ENCODE measurements at regions of chr18 and their contacts with region 1.

Region 1: GRCh38 chr18:7272311-7273049 is 41.6 kb downstream of the LRRC30 start:
- DNase-seq: peak; percentile 56 to 69
- H3K4me3 ChIP-seq: no peak overlapping the region
- H3K4me3 Mint-ChIP-seq: peak overlapping the region; percentile 31
- H3K27ac Mint-ChIP-seq: no peak overlapping the region
- H3K4me1 ChIP-seq: no peaks in the 10 kb centered on the region; the same call in 1 of the 2 replicates
- H3K4me1 Mint-ChIP-seq: peaks cover 7% of the 10 kb centered on the region
- H3K27me3 ChIP-seq: no peaks in the 10 kb centered on the region; the same call in 1 of the 2 replicates
- H3K27me3 Mint-ChIP-seq: no peaks in the 10 kb centered on the region
- CTCF ChIP-seq: peak; percentile 71 to 72

Region 2: GRCh38 chr18:7221424-7222155 is 50.9 kb before region 1 on chr18:
- CTCF ChIA-PET with region 1: no interaction called
- POLR2A ChIA-PET with region 1: no interaction called
- intact Hi-C with region 1: loop called (anchors 1 kb)
- DNase-seq: peak; percentile 75 to 77
- H3K4me3 ChIP-seq: no peak overlapping the region
- H3K4me3 Mint-ChIP-seq: no peak overlapping the region
- H3K27ac Mint-ChIP-seq: no peak overlapping the region
- H3K4me1 ChIP-seq: no peaks in the 10 kb centered on the region
- H3K4me1 Mint-ChIP-seq: no peaks in the 10 kb centered on the region
- H3K27me3 ChIP-seq: no peaks in the 10 kb centered on the region
- H3K27me3 Mint-ChIP-seq: peaks cover 6% of the 10 kb centered on the region
- CTCF ChIP-seq: peak; percentile 65 to 84

Region 3: DNA sequence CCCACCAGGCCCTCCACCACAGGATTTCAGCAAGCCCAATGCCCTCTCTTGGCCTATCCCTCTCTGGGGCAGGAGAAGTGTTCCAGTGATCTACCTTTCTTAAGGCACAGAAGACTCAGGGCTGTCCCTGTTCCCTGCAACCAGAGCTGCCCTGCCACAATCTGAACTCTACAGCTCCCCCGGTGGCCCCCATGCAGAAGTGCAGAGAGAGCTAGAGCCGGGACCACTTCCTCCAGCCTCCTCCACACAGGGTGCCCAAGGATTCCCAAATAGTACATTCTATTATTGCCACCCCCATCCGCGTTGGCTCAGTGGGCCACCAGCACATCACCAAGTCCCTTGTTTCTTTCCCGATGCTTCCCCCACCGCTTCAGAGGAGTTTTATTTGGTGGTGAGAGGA is 179.9 kb after region 1 on chr18:
- CTCF ChIA-PET with region 1: interaction called, 8 read pairs
- POLR2A ChIA-PET with region 1: no interaction called
- intact Hi-C with region 1: loop called (anchors 2 kb)
- DNase-seq: peak in 1 of 2 experiments; percentile 60
- H3K4me3 ChIP-seq: no peak overlapping the region
- H3K4me3 Mint-ChIP-seq: no peak overlapping the region
- H3K27ac Mint-ChIP-seq: no peak overlapping the region
- H3K4me1 ChIP-seq: peaks cover 6% of the 10 kb centered on the region; the same call in 1 of the 2 replicates
- H3K4me1 Mint-ChIP-seq: peaks cover 5% of the 10 kb centered on the region
- H3K27me3 ChIP-seq: no peaks in the 10 kb centered on the region
- H3K27me3 Mint-ChIP-seq: peaks cover 7% of the 10 kb centered on the region
- CTCF ChIP-seq: peak; percentile 66 to 81

Region 4: DNA sequence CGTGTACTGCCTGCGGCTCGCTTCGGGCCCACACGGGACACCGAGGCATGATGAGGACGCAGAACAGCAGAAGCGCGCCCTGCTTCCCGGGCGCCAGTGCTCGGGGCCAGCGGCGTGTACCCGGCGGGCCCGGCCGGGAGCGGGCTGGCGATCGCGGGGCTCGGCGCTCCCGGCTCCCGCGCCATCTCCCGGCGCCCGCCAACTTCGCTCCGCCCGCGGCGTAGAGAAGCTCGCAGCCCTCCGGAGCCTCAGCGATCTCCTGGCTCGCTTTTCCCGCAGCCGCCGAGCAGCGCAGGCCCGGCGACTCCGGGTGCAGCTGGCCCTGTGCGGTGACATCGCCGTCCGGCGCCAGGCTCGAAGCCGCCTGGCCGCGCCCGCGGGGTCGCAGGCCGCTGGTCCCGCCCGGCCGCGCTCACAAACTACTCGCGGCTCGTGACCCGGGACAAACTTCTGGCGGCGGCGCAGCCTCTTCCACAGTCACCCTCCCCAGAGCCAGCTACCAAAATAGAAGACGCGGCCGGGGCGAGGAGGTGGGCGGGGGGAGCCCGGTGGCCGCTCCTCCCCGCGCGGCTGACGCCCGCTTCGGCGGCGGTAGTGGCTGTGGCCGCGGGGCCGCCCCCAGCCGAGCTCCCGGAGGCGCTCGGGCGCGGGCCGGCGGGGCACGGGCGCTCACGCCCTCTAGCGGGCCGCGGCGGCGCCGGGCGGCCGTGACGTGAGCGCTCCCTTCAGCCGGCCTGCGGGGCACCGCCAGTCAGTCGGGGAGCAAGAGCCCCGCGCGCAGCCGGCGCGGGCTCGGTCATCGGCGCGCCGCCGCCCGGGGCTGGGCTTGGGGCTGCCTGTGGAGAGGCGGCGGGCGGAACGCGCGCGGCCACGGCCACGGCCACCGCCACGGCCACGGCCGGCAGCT is 294.3 kb after region 1 on chr18 and contains the start of gene PTPRM:
- CTCF ChIA-PET with region 1: interaction called, 21 read pairs
- POLR2A ChIA-PET with region 1: no interaction called
- intact Hi-C with region 1: loop called (anchors 1 kb)
- DNase-seq: peak; percentile 72 to 89
- H3K4me3 ChIP-seq: peak within 1 kb of the TSS; percentile 93
- H3K4me3 Mint-ChIP-seq: peak within 1 kb of the TSS; percentile 83
- H3K27ac Mint-ChIP-seq: peak within 1 kb of the TSS; percentile 72
- H3K4me1 ChIP-seq: peaks cover 17% of the 10 kb centered on the region
- H3K4me1 Mint-ChIP-seq: peaks cover 16% of the 10 kb centered on the region
- H3K27me3 ChIP-seq: no peaks in the 10 kb centered on the region
- H3K27me3 Mint-ChIP-seq: no peaks in the 10 kb centered on the region
- CTCF ChIP-seq: peak in 1 of 2 experiments; percentile 9
- total RNA-seq, gene PTPRM: 100.0 and 112 TPM in 2 replicates

Region 5: GRCh38 chr18:7626922-7627440 is 354.5 kb after region 1 on chr18:
- CTCF ChIA-PET with region 1: no interaction called
- POLR2A ChIA-PET with region 1: no interaction called
- intact Hi-C with region 1: loop called (anchors 1 kb)
- DNase-seq: peak; percentile 71 to 80
- H3K4me3 ChIP-seq: no peak overlapping the region
- H3K4me3 Mint-ChIP-seq: peak overlapping the region; percentile 21
- H3K27ac Mint-ChIP-seq: peak overlapping the region; percentile 88
- H3K4me1 ChIP-seq: peaks cover 62% of the 10 kb centered on the region
- H3K4me1 Mint-ChIP-seq: peaks cover 45% of the 10 kb centered on the region
- H3K27me3 ChIP-seq: no peaks in the 10 kb centered on the region
- H3K27me3 Mint-ChIP-seq: no peaks in the 10 kb centered on the region
- CTCF ChIP-seq: peak in 1 of 2 experiments; percentile 53

Region 6: DNA sequence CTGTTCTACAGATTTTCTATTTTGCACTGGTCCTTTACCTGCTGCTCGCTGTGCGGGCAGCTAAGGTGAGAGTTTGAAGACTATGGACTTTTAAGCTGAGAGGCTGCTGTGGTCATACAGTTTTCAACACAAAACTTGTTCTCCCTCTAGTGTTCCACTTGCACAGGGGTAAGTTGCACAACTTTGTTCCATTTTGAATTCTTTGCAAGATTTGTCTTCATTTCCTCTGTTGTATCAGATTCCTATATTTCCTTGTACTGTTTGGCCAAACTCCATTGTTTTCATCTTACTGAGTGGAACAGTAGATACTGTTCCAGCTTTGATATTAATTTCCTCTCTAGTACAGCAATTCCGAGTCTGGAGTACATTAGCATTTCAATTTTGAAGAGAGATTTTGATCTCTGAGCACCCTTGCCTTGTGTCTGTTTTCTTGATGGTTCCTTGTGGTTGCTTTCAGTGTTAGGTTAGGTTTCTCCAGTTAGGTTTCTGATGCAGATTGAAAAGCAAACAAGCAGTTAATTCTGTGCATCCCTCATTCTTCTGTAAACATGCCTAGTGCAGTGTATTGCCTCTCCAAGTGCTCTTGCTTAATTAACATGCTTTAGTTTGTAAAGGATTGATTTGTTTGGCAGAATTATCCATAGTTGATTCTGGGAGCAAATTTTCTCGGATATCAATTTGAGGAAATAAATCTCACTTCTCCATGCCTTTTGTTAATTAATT is 483.4 kb after region 1 on chr18:
- CTCF ChIA-PET with region 1: interaction called, 3 read pairs
- POLR2A ChIA-PET with region 1: no interaction called
- intact Hi-C with region 1: loop called (anchors 1 kb)
- DNase-seq: peak in 1 of 2 experiments; percentile 48
- H3K4me3 ChIP-seq: peak overlapping the region; percentile 11
- H3K4me3 Mint-ChIP-seq: peak overlapping the region; percentile 84
- H3K27ac Mint-ChIP-seq: peak overlapping the region; percentile 93
- H3K4me1 ChIP-seq: peaks cover 96% of the 10 kb centered on the region
- H3K4me1 Mint-ChIP-seq: peaks cover 74% of the 10 kb centered on the region
- H3K27me3 ChIP-seq: no peaks in the 10 kb centered on the region
- H3K27me3 Mint-ChIP-seq: no peaks in the 10 kb centered on the region
- CTCF ChIP-seq: peak in 1 of 2 experiments; percentile 56

Region 7: DNA sequence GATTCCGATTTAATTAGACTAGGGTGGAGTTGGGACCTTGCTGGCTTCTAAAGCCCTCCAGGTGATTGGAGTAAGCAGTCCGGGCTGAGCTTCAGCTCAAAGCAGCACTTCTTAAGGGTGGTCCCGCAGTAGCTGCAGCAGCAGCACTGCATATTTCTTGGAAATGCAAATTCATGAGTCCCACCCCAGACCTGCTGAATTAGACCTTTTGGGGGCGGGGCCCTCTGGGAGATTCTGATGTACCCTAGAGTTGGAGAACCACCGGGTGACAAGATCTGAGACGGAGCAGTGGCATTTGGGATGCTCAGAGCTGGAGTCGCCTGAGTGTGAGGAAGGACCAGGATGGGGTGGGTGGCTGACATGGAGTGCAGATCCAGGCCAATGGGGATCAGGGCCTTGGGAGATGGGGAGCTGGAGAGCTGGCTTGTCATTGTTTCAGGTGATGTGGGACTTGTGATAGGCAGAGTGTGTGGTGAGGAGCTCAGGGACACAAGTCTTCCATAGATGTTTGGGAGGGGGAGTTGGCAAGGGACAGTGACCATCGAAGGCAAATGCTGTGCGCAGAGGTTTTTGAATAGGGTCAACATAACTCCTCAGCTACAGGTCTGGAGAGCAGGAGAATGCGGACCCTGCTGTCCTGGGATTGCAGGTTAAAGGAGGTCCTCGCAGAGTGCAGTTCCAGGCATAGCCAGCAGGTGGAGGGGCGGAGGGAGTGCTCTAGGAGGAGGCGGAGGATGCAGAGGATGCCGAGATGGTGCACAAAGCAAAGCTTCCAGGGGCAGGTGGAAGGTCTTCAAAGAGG is 1205.9 kb after region 1 on chr18:
- CTCF ChIA-PET with region 1: interaction called, 5 read pairs
- POLR2A ChIA-PET with region 1: no interaction called
- intact Hi-C with region 1: loop called (anchors 1 kb)
- DNase-seq: peak; percentile 76 to 84
- H3K4me3 ChIP-seq: no peak overlapping the region
- H3K4me3 Mint-ChIP-seq: no peak overlapping the region
- H3K27ac Mint-ChIP-seq: no peak overlapping the region
- H3K4me1 ChIP-seq: no peaks in the 10 kb centered on the region
- H3K4me1 Mint-ChIP-seq: no peaks in the 10 kb centered on the region
- H3K27me3 ChIP-seq: no peaks in the 10 kb centered on the region
- H3K27me3 Mint-ChIP-seq: peaks cover 22% of the 10 kb centered on the region
- CTCF ChIP-seq: peak; percentile 86 to 93

Measured in Caco-2 (cell line).